Right ventricle myocardium superior (tissue), 1 donor: ENCODE measurements at regions of chr5 and their contacts with region 1.

Region 1: GRCh38 chr5:140346348-140347101 is at the start of gene HBEGF:
- DNase-seq: peak; percentile 90
- ATAC-seq: peak; percentile 89
- total RNA-seq, gene HBEGF: 21.7 TPM

Region 2: GRCh38 chr5:140174465-140175366 is 171.8 kb before region 1 on chr5 and contains the start of gene CYSTM1:
- intact Hi-C with region 1: loop called (anchors 5 kb)
- DNase-seq: peak; percentile 98
- ATAC-seq: peak; percentile 96
- total RNA-seq, gene CYSTM1: 58.3 TPM